ENCODE measurements at regions of chr6 and their contacts with region 1.

Region 1: GRCh38 chr6:89371849-89372505 is 19.5 kb upstream of the UBE2J1 start:
- DNase-seq: peak; percentile 85
- ATAC-seq: peak; percentile 87
- H3K4me3 Mint-ChIP-seq: no peak overlapping the region
- H3K27ac Mint-ChIP-seq: peak overlapping the region; percentile 46
- H3K4me1 Mint-ChIP-seq: peaks cover 19% of the 10 kb centered on the region
- H3K27me3 Mint-ChIP-seq: no peaks in the 10 kb centered on the region
- CTCF ChIP-seq: peak; percentile 84

Region 2: DNA sequence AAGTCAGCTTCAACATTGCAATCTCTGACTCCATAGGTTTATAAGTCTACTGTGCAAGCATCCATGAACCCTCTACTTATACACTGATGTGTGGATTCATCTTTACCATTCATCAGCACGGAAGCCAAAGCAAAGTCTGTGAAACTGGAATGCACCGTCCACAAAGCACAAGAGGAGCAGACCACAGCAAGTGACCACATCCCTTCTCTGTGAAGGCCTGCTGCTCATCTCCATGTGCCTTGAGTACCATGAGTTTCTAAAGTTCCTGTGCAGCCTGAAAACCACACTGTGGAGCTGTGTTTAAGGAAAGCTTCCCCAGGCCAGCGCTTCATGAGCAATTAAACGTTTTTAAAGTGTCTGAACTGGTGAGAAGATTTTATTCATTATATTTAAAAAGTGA is 174.8 kb before region 1 on chr6:
- CTCF ChIA-PET with region 1: no interaction called
- POLR2A ChIA-PET with region 1: no interaction called
- intact Hi-C with region 1: no loop called
- DNase-seq: no peak
- ATAC-seq: no peak
- H3K4me3 Mint-ChIP-seq: no peak overlapping the region
- H3K27ac Mint-ChIP-seq: no peak overlapping the region
- H3K4me1 Mint-ChIP-seq: no peaks in the 10 kb centered on the region
- H3K27me3 Mint-ChIP-seq: peaks cover 1% of the 10 kb centered on the region
- CTCF ChIP-seq: no peak

Region 3: DNA sequence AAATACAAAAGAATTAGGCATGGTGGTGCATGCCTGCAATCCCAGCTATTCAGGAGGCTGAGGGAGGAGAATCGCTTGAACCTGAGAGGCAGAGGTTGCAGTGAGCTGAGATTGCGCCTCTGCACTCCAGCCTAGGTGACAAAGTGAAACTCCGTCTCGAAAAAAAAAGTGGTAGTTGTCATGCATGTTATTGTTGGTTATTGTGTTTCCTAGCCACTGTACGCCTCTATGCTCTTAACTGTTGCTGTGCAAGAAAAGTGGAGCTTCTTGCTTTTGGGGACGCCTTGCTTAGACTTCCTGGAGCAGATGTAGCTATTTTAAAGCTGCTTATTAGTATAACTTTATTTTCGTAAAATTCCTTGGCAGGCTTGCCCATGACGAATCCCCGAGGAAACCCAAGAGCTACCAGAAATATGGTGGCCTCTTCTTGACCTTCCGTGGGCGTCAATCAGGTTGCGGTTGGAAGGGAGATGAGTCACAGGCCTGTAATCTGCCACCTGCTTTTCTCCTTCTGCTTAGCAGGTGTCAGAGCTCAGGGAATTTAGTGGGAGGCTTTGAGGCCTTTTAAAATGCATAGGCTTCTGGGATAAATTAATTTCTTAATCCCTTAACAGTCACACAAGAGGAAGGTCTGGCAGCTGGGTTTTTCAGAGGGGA is 74.2 kb before region 1 on chr6:
- CTCF ChIA-PET with region 1: interaction called, 17 read pairs
- POLR2A ChIA-PET with region 1: no interaction called
- intact Hi-C with region 1: no loop called
- DNase-seq: peak; percentile 86
- ATAC-seq: peak; percentile 80
- H3K4me3 Mint-ChIP-seq: peak overlapping the region; percentile 60
- H3K27ac Mint-ChIP-seq: peak overlapping the region; percentile 82
- H3K4me1 Mint-ChIP-seq: peaks cover 19% of the 10 kb centered on the region
- H3K27me3 Mint-ChIP-seq: no peaks in the 10 kb centered on the region
- CTCF ChIP-seq: no peak

Region 4: DNA sequence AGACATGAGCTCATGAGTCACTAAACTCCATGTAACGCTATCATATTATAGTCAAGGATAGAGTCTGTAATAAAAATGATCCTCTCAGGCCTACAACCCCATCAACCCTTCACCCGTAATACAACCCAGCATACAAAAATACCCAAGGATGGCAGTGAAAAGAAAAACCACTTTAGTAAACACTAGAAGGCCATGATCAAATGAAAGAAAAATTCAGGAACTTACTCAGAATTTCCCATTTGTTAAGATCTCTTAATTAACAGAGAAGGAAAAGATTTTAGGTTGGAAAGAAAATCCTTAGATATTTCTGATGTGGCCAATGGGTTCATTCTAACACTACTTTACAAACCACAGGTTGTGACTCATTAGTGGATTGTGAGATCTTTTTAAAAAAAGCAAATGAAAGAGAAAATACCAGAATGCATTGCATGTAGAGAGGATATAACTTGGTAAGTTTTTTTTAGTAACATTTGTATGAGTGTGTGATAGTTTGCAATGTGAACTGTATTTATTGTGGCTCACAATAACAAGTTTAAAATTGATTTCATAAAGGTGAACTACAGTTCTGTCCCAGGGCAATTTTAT is 11.5 kb before region 1 on chr6:
- CTCF ChIA-PET with region 1: interaction called, 83 read pairs
- POLR2A ChIA-PET with region 1: interaction called, 5 read pairs
- intact Hi-C with region 1: no loop called
- DNase-seq: no peak
- ATAC-seq: peak; percentile 75
- H3K4me3 Mint-ChIP-seq: peak overlapping the region; percentile 20
- H3K27ac Mint-ChIP-seq: peak overlapping the region; percentile 75
- H3K4me1 Mint-ChIP-seq: peaks cover 52% of the 10 kb centered on the region
- H3K27me3 Mint-ChIP-seq: no peaks in the 10 kb centered on the region
- CTCF ChIP-seq: no peak

Region 5: DNA sequence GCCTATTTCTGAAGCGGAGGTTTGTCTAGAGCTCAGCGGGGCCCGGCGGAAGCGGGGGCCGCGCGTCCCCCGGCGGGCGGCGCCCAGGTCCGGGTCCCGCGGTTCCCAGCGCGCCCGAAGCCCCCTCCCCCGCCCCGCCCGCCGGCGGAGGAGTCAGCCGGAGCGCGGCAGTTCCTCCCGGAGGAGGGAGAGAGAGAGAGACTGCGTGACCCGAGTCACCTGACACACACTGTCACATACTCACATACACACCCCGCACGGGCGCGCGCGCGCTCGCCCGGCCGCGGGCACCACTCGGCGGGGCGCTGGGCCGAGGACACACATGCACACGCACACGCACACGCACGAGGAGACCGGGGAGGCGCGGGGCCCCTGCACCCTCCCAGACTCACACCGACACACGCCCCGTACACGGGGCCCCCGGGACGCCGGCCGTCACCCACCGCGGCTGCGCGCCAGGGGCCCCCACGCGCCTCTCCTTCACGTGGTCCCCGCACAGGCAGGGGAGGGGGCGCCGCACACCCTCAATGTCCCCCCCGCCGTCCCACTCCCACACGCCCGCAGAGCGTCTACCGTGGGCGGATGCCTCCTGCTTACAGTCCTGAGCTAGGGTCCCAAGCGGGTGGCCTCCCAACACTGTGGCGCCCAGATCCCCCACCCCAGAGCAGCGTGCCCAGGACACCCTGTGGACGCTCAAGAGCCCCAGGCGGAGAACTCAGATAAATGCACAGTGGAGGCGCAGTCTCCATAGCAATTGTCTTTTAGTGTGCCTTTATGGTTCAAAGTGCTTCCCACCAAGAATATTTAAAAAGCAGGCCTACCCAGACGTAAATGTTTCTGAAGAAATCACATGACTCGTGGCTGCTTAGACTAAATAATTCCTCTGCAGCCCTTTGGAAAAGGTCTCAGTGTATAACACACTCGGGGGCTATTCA is 40.4 kb after region 1 on chr6 and contains the start of gene RRAGD:
- CTCF ChIA-PET with region 1: interaction called, 52 read pairs
- POLR2A ChIA-PET with region 1: interaction called, 3 read pairs
- intact Hi-C with region 1: loop called (anchors 5 kb)
- DNase-seq: peak; percentile 74
- ATAC-seq: peak; percentile 79
- H3K4me3 Mint-ChIP-seq: peak within 1 kb of the TSS; percentile 86
- H3K27ac Mint-ChIP-seq: peak within 1 kb of the TSS; percentile 85
- H3K4me1 Mint-ChIP-seq: peaks cover 20% of the 10 kb centered on the region
- H3K27me3 Mint-ChIP-seq: peaks cover 13% of the 10 kb centered on the region
- CTCF ChIP-seq: no peak
- total RNA-seq, gene RRAGD: 19.7 to 22.1 TPM

Region 6: GRCh38 chr6:89479897-89480296 is 107.9 kb after region 1 on chr6:
- CTCF ChIA-PET with region 1: no interaction called
- POLR2A ChIA-PET with region 1: no interaction called
- intact Hi-C with region 1: no loop called
- DNase-seq: peak; percentile 24
- ATAC-seq: peak; percentile 60
- H3K4me3 Mint-ChIP-seq: no peak overlapping the region
- H3K27ac Mint-ChIP-seq: no peak overlapping the region
- H3K4me1 Mint-ChIP-seq: peaks cover 18% of the 10 kb centered on the region
- H3K27me3 Mint-ChIP-seq: no peaks in the 10 kb centered on the region
- CTCF ChIP-seq: no peak

Region 7: GRCh38 chr6:89610149-89610642 is 238.2 kb after region 1 on chr6:
- CTCF ChIA-PET with region 1: interaction called, 28 read pairs
- POLR2A ChIA-PET with region 1: no interaction called
- intact Hi-C with region 1: loop called (anchors 5 kb)
- DNase-seq: peak; percentile 90
- ATAC-seq: peak; percentile 95
- H3K4me3 Mint-ChIP-seq: no peak overlapping the region
- H3K27ac Mint-ChIP-seq: no peak overlapping the region
- H3K4me1 Mint-ChIP-seq: peaks cover 5% of the 10 kb centered on the region
- H3K27me3 Mint-ChIP-seq: no peaks in the 10 kb centered on the region
- CTCF ChIP-seq: peak; percentile 94

Measured in activated CD8-positive, alpha-beta T cell treated with anti-CD3 and anti-CD28 coated beads for 36 hours (primary cell).